Aorta (tissue), 5 donors: ENCODE measurements at regions of chr1 and their contacts with region 1.

Region 1: DNA sequence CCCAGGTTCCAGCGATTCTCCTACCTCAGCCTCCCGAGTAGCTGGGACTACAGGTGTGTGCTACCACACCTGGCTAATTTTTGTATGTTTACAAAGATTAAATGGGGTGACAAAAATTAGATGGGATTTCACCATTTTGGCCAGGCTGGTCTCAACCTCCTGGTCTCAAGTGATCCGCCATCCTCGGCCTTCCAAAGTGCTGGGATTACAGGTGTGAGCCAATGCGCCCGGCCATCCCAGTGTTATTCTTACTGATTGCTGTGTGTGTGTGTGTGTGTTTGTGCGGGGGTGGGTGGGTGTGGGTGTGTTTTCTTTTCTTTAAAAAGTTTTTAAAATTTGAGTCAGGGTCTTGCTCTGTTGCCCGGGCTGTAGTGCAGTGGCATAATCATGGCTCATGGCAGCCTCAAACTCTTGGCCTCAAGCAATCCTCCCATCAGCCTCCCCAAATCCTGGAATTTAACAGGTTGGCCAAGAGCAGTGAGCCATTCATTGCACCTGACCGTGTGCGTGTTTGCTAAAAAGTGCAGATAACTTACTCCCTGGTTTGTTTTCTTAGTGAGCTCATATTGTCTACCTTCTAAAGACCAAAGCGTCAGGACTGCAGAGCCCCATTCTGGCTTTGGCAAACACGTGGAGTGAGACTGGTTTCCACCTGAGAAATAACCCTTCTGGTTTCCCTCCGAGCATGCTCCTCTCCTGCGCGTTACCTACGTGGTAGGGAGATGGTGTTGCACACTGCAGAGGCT is 32.4 kb upstream of the CA6 start:
- DNase-seq: no peak
- ATAC-seq: no peak
- H3K4me3 ChIP-seq: no peak overlapping the region
- H3K27ac ChIP-seq: no peak overlapping the region
- H3K4me1 ChIP-seq: no peaks in the 10 kb centered on the region
- H3K27me3 ChIP-seq: no peaks in the 10 kb centered on the region

Region 2: GRCh38 chr1:8878448-8879347 is 34.6 kb before region 1 on chr1 and contains the start of gene ENO1:
- intact Hi-C with region 1: no loop called
- DNase-seq: peak; percentile 98 to 99
- ATAC-seq: peak; percentile 97
- H3K4me3 ChIP-seq: peak within 1 kb of the TSS; percentile 80 to 85
- H3K27ac ChIP-seq: peak within 1 kb of the TSS; percentile 80 to 85
- H3K4me1 ChIP-seq: peaks cover 0 to 5% of the 10 kb centered on the region in 2 donors
- H3K27me3 ChIP-seq: no peaks in the 10 kb centered on the region
- total RNA-seq, gene ENO1: 542 to 688 TPM

Region 3: DNA sequence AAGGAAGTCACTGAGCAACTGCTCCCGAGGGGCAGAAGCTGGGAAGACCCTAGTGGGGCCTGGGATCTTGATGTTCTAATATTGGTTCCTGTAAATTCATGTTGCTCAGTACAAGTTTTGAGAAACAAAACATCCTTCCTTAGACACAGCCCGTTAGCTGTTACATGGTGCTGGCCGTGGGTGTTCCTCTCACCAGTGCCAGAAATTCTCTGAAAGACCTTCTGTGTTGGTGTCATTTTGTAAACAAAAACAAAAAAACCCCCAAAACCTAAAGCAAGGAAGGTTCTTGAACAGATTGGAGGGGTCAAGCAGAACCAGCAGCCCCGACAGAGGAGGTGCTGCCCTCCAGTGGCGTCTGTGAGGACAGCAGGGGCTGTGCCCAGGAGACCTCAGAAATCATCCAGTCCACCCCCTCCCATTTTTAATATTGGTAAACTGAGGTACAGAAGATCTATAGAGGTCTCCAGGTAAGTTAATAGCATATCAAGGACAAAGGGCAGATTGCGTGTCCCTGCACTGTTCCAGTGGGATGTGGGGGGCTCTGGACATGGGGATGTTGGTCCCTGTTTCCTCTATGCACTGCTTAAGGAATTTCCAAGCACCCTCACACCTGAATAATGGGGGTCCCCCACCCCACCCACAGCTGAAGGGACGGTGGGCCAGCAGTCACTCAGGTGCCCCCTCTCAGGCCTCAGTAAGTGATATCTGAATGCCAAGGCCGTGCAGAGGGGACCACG is 74.8 kb after region 1 on chr1:
- intact Hi-C with region 1: loop called (anchors 2 to 5 kb)
- DNase-seq: peak; percentile 73 to 85
- ATAC-seq: peak; percentile 77
- H3K4me3 ChIP-seq: no peak overlapping the region
- H3K27ac ChIP-seq: no peak overlapping the region
- H3K4me1 ChIP-seq: peaks cover 0 to 1% of the 10 kb centered on the region in 2 donors
- H3K27me3 ChIP-seq: no peaks in the 10 kb centered on the region

Region 4: DNA sequence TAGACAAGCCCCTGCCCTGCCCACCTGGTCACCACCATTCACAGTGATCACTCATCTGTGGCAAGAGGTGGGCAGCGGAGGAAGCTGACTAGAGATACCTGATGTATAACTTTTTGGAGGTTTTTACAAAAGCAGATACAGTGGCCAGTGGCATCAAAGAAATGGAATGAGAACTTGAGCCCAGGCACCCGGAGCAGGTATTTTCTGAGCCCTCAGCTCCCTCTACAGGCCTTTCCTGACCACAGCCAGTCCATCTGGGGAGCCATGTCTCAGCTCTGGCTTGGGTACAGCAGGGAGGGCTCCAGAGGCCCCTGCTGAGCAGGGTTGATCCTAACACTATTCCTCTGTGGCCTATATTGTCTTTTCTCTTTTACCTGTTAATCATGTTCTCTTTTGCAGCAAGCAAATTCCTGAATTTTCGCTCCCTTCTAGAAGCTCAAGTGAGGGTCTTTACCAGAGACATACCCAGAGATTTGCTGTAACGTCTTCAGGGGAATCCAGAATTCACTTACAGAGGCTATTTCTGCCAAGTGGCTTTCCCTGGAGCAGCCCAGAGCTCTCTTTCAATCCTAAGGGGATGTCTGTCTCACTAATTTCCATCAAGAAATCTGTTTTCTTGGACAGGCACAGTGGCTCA is 188.3 kb after region 1 on chr1:
- intact Hi-C with region 1: loop called (anchors 5 kb)
- DNase-seq: no peak
- ATAC-seq: no peak
- H3K4me3 ChIP-seq: no peak overlapping the region
- H3K27ac ChIP-seq: no peak overlapping the region
- H3K4me1 ChIP-seq: no peaks in the 10 kb centered on the region
- H3K27me3 ChIP-seq: no peaks in the 10 kb centered on the region

Region 5: DNA sequence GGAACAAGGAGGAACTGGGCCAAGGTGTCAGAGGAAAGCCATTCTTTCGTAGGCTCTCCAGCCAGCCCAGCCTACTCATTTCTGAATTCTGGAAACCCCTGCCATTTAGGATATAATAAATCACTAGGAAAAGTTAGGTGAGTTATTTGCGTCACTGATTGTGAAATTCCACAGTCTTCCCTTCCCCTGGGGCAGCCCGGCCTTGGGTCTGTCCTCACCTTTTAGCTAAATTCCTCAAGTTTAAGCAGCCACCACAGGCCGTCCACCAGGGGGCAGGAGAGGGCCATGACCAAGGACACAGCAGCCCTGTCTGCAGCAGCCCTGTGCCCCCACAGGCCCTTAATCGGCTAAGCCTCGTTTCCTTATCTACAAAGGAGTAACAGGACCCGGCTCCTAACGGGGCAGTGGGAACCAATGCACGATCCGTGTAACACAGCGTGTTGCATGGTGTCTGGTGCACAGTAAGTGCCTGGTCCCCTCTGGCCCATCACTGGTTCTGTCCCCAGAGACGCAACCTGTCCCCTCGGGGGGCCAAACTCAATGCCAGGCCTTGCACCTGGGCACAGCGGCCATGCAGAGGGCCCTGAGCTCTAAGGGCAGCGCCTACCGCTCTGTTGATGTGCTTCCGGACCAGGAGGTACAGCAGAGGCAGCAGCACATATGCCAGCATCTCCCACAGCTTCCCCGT is 197.5 kb after region 1 on chr1:
- intact Hi-C with region 1: loop called in 1 of 2 experiments (anchors 5 kb)
- DNase-seq: peak; percentile 93 to 97
- ATAC-seq: peak; percentile 87
- H3K4me3 ChIP-seq: no peak overlapping the region
- H3K27ac ChIP-seq: no peak overlapping the region
- H3K4me1 ChIP-seq: no peaks in the 10 kb centered on the region
- H3K27me3 ChIP-seq: no peaks in the 10 kb centered on the region